Tibial artery (tissue), 4 donors: ENCODE measurements at regions of chr19 and their contacts with region 1.

Region 1: DNA sequence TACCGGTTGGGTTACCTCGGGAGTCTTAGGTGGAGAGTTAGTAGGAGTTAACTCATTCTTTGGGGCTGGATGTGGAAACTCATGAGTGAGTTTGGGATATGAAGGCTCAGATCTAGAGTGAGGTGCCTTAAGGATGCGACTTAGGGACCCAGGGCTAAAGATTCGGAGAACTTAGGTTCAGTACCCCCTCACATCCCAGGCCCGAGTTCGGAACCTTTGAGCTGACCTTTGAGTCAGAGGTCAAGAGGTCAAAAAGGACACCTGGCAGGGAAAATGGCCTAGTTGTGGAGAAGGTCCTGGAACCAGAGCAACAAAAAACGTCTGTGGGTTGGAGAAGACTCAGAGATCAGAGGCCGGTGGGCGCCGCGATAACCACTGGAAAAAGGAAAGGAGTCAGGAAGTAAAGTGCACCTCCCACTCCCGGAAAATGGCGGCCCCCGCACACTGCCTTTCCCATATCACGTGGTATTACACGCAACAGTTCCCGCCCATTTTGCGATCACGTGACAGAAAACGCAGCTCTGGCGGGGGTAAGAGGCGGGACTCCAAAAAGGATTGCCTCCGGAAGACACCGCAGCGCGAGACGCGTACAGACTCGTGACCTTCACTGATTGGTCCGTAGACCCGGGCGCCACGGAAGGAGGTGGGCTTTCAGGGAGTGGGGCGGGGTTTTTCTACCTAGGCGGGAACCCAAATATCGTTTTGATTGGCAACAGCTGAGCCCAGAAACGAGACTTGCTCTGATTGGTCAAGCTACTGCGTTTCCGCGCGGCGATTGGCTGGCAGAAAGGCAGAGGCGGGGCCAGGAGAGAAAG is at the start of gene ACTMAP:
- DNase-seq: peak; percentile 100
- H3K4me3 ChIP-seq: peak within 1 kb of the TSS; percentile 63 to 65
- H3K27ac ChIP-seq: peak within 1 kb of the TSS; percentile 87 to 92
- H3K4me1 ChIP-seq: peaks cover 0 to 55% (median 42%) of the 10 kb centered on the region in 4 donors
- H3K27me3 ChIP-seq: no peaks in the 10 kb centered on the region
- CTCF ChIP-seq: peak in 1 of 2 experiments; percentile 25

Region 2: DNA sequence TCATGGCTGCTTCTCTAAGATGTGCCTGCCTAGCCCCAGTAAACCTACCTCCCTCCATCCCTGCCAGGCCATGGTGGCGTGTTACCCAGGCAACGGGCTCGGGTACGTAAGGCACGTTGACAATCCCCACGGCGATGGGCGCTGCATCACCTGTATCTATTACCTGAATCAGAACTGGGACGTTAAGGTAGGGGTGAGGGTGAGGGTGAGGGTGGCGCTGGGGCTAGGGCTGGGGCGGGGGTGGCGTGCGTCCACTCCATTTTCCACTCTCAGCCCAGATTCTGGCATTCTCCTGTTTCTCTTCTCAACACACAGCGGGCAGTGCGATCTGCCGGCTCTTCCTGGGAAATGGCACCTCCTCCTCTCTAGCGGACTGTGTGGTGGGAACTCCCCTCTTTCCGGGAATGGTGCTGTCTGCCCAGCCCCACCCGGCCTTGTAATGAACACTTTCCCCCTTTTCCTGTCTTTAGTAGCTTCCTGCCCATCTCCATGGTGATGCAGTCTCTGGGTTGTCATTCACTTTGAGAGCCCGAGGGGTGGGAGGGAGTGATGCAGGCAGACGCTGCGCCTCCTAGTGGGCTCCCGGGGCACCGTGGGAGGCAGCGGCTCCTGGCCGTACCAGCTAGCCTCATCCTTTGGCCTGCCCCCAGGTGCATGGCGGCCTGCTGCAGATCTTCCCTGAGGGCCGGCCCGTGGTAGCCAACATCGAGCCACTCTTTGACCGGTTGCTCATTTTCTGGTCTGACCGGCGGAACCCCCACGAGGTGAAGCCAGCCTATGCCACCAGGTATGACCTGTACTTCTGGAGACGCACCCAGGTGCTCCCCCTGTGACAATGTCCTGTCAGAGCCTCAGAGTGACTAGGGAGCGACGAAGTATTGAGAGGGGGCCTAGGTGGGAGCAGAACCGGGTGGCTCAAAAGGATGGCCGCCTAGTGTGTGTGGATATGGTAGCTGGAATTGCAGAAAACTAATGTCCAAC is 56.5 kb after region 1 on chr19:
- intact Hi-C with region 1: loop called (anchors 10 kb)
- DNase-seq: peak; percentile 89 to 91
- H3K4me3 ChIP-seq: peak overlapping the region in 1 of 2 donors; percentile 0
- H3K27ac ChIP-seq: peak overlapping the region; percentile 53 to 97
- H3K4me1 ChIP-seq: peaks cover 7 to 91% (median 81%) of the 10 kb centered on the region in 4 donors
- H3K27me3 ChIP-seq: no peaks in the 10 kb centered on the region
- CTCF ChIP-seq: peak; percentile 82 to 91